Gastrocnemius medialis (tissue), 4 donors: ENCODE measurements at regions of chr5 and their contacts with region 1.

Region 1: GRCh38 chr5:32390819-32391591 is 53.5 kb downstream of the ZFR start:
- DNase-seq: peak in 1 of 2 donors; percentile 19
- ATAC-seq: peak; percentile 91
- H3K4me3 ChIP-seq: no peak overlapping the region
- H3K27ac ChIP-seq: peak overlapping the region; percentile 21 to 51 (median 43)
- H3K4me1 ChIP-seq: no peaks in the 10 kb centered on the region
- H3K27me3 ChIP-seq: no peaks in the 10 kb centered on the region
- CTCF ChIP-seq: peak in 1 of 5 experiments; percentile 11
- POLR2A ChIP-seq: no peak

Region 2: DNA sequence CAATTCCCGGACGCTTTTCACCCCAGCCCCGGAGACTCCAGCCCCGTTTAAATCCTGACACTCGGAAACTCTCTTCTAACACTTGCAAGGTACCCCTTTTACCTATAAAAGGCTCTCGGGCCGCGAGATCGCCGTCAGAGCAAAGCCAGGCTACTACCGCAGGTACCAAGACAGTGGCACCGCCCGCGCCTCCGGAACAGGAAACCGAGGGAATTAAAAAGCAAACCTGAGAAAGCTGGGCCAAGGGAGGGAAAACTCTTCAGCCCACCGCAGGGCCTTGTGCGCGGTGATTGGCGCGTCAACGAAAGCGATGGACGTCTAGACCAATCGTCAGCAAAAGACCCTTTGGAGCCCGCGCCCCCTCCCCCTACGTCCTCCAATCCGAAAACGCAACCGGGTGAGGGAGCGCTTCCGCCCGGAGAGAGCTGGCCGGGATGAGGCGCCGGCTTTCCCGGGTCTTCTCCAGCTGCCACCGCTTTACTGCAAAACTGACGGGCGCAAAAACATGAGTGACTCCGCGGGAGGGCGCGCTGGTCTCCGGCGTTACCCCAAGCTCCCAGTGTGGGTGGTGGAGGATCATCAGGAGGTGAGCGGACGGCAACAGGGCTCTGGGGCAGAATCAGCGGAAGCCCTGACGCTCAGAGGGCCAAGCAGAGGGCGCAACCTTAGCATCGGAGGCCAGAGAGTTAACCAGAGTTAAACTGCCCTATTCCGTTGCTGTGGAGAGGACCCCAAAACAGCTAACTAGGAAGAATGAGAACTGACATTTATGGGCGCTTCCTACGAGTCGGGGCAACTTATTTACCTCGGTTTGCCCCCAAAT is 858.9 kb before region 1 on chr5 and contains the starts of genes C5orf22 and DROSHA:
- in situ Hi-C with region 1: loop called in 1 of 4 experiments (anchors 25 kb)
- intact Hi-C with region 1: no loop called
- DNase-seq: peak; percentile 95
- ATAC-seq: peak; percentile 99 to 100
- H3K4me3 ChIP-seq: peak within 1 kb of the TSS; percentile 76 to 97 (median 86)
- H3K27ac ChIP-seq: peak within 1 kb of the TSS; percentile 66 to 92 (median 90)
- H3K4me1 ChIP-seq: peaks cover 21 to 34% of the 10 kb centered on the region in 2 donors
- H3K27me3 ChIP-seq: no peaks in the 10 kb centered on the region
- CTCF ChIP-seq: peak in 2 of 5 experiments; percentile 12
- POLR2A ChIP-seq: peak; percentile 64 to 76
- total RNA-seq, gene C5orf22: 24.1 to 27.0 (median 25.2) TPM
- total RNA-seq, gene DROSHA: 9.2 to 28.8 (median 28.4) TPM

Region 3: DNA sequence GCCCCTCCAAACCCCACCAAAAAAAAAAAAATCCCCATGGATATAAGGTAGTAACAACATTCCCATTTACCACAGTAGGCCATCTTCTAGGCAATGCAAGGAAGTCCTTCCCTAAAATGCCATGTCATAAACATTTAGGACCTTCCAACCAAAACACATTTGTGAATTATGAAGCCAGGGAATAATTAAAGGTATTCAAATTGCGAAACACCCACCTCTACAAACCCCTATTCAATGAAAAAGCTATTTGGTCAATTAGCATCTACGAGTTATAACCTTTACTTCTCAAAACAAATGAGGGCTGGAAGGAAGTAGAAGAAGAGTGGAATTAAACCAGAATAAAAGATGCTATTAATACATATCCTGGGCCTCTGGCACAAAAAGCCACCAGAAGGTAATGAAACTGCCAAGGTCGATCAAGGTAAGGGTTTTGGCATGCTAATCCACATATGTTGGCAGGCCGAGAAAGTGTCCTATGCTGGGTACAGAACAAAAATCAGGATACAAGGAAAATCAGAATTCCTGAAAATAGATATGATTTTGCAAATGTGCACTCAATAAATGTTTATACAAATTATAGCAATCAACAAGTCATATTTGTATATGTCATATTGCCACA is 125.9 kb before region 1 on chr5:
- in situ Hi-C with region 1: no loop called
- intact Hi-C with region 1: no loop called
- DNase-seq: no peak
- ATAC-seq: no peak
- H3K4me3 ChIP-seq: no peak overlapping the region
- H3K27ac ChIP-seq: peak overlapping the region in 1 of 4 donors; percentile 13
- H3K4me1 ChIP-seq: peaks cover 10 to 12% of the 10 kb centered on the region in 2 donors
- H3K27me3 ChIP-seq: no peaks in the 10 kb centered on the region
- CTCF ChIP-seq: no peak
- POLR2A ChIP-seq: no peak